ENCODE measurements at regions of chr7 and their contacts with region 1.

Region 1: GRCh38 chr7:144835652-144836544 is at the start of gene TPK1:
- DNase-seq: peak; percentile 68 to 94
- H3K4me3 ChIP-seq: peak within 1 kb of the TSS; percentile 89 to 92
- H3K27ac ChIP-seq: peak within 1 kb of the TSS; percentile 96 to 98
- H3K4me1 ChIP-seq: peaks cover 4 to 13% of the 10 kb centered on the region in 2 donors
- H3K27me3 ChIP-seq: no peaks in the 10 kb centered on the region
- CTCF ChIP-seq: no peak
- total RNA-seq, gene TPK1: 3.7 TPM

Region 2: GRCh38 chr7:143391462-143392404 is 1444.2 kb before region 1 on chr7:
- intact Hi-C with region 1: loop called (anchors 10 kb)
- DNase-seq: peak; percentile 66 to 96
- H3K4me3 ChIP-seq: peak overlapping the region; percentile 1 to 42
- H3K27ac ChIP-seq: peak overlapping the region; percentile 97 to 99
- H3K4me1 ChIP-seq: peaks cover 35 to 73% of the 10 kb centered on the region in 2 donors
- H3K27me3 ChIP-seq: no peaks in the 10 kb centered on the region
- CTCF ChIP-seq: no peak

Region 3: DNA sequence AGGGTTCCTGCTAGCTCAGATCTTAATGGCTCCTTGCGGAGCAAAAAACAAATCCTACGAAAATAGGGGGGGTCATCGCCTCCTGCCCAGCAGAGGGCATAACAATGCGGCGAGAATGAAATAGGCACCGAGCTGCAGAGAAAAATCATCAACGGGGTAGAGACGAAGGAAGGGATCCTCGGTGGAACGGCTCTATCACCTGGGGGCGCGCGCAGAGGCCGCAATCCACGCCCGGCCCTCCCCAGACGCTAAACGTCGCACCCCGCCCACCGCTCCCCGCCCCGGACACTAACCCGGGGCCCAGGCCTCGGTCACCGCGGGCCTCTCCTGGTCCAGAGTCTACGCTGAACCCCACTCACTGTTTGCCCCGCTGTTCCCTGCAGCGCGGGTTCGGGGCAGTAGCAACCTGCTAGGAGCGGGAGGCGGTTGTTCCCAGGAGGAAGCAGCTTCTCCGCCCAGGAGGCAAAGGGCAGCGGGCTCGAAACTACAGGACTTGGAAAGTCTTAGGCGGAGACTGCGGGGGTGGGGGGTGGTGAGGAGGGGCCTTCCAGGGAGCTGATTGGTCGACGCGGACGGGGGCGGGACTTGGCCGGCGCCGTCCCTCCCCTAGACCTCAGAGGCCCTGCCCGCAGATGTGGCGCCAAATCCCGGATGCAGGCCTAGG is 934.1 kb before region 1 on chr7 and contains the start of gene TCAF1:
- intact Hi-C with region 1: loop called (anchors 10 kb)
- DNase-seq: peak; percentile 79 to 97
- H3K4me3 ChIP-seq: peak within 1 kb of the TSS; percentile 70 to 78
- H3K27ac ChIP-seq: peak within 1 kb of the TSS; percentile 79 to 84
- H3K4me1 ChIP-seq: peaks cover 0 to 3% of the 10 kb centered on the region in 2 donors
- H3K27me3 ChIP-seq: no peaks in the 10 kb centered on the region
- CTCF ChIP-seq: peak in 2 of 3 experiments; percentile 40 to 43
- total RNA-seq, gene TCAF1: 30.9 TPM

Region 4: DNA sequence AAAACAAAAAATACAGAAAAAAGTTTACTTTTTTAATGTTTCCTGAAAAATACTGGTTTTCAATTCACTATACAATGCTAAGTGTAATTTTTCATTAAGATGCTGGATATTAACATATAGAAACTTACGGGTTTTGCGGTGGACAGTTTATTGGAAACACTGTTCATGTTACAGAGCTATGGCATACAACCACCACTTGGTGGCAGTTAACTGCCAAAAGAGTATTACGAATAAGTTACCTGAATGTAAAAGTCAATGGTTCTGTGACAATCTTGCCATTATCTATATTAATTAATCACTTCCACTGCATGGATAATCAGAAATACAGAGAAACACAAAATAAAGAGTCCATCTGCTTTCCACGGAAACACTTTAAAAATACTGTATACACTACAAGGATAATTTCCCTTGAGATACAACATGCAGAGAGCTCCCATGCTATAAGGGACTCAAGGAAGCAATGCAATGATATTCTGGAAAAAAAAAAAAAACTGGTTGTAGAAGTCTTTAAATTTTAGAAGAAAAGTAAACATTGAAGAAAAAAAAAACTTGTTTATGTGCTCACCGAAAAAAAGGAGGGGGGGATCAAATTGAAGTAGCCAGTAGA is 97.1 kb before region 1 on chr7:
- intact Hi-C with region 1: loop called (anchors 5 kb)
- DNase-seq: no peak
- H3K4me3 ChIP-seq: no peak overlapping the region
- H3K27ac ChIP-seq: no peak overlapping the region
- H3K4me1 ChIP-seq: peaks cover 0 to 3% of the 10 kb centered on the region in 2 donors
- H3K27me3 ChIP-seq: no peaks in the 10 kb centered on the region
- CTCF ChIP-seq: peak; percentile 38 to 54 (median 40)

Region 5: GRCh38 chr7:144786522-144786921 is 49.4 kb before region 1 on chr7:
- intact Hi-C with region 1: loop called (anchors 2 kb)
- DNase-seq: no peak
- H3K4me3 ChIP-seq: no peak overlapping the region
- H3K27ac ChIP-seq: no peak overlapping the region
- H3K4me1 ChIP-seq: peaks cover 0 to 16% of the 10 kb centered on the region in 2 donors
- H3K27me3 ChIP-seq: no peaks in the 10 kb centered on the region
- CTCF ChIP-seq: no peak

Region 6: DNA sequence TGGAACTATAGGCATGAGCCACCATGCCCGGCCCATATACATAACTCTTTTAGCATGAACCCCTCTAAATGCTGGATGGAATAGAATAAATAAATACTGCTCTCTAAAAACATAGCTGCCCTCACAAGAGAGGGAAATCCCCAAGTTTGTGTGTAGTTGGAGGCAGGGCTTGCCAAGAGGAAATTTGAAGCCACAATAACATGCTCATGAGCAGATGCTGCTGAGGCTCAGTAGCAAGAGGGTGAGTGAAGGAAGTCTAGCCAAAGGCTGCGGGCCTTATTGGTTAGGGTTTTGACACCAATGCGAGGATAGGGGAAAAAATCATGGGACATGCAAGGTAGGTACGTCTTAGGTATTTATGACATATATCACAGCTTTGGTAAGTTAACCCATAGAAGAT is 17.4 kb before region 1 on chr7:
- intact Hi-C with region 1: no loop called
- DNase-seq: no peak
- H3K4me3 ChIP-seq: no peak overlapping the region
- H3K27ac ChIP-seq: no peak overlapping the region
- H3K4me1 ChIP-seq: peaks cover 0 to under 1% of the 10 kb centered on the region in 2 donors
- H3K27me3 ChIP-seq: no peaks in the 10 kb centered on the region
- CTCF ChIP-seq: no peak